Heart right ventricle (tissue), 16 donors: ENCODE measurements at regions of chr1 and their contacts with region 1.

Region 1: GRCh38 chr1:100516857-100517256 is 21.1 kb upstream of the GPR88 start:
- DNase-seq: no peak
- ATAC-seq: no peak
- H3K4me3 ChIP-seq: no peak overlapping the region
- H3K27ac ChIP-seq: no peak overlapping the region
- H3K4me1 ChIP-seq: peaks cover 0 to 4% (median 0%) of the 10 kb centered on the region in 9 donors
- H3K27me3 ChIP-seq: no peaks in the 10 kb centered on the region
- CTCF ChIP-seq: no peak

Region 2: DNA sequence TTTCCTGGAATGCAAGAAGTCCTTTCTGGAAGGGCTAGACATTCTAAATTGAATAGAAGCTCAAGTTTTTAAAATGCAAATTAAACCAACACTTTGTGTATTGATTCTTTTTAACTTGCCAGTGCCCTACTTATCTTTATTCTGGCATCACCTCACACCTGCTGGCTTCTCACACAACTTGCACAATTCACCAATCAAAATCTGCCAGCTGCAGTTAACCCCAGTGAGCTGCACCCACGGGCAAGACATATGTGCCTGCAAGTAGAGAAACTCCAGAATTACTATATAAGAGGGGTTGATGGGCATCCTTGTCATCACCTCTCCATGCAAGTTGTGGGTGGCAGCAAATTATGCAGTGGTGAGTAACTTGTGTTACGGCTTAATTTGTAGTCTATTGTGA is 1264.2 kb before region 1 on chr1:
- intact Hi-C with region 1: no loop called
- DNase-seq: no peak
- ATAC-seq: no peak
- H3K4me3 ChIP-seq: no peak overlapping the region
- H3K27ac ChIP-seq: no peak overlapping the region
- H3K4me1 ChIP-seq: no peaks in the 10 kb centered on the region
- H3K27me3 ChIP-seq: no peaks in the 10 kb centered on the region
- CTCF ChIP-seq: no peak

Region 3: GRCh38 chr1:100539836-100540536 is 23.1 kb after region 1 on chr1:
- intact Hi-C with region 1: loop called in 1 of 10 experiments (anchors 2 kb)
- DNase-seq: peak in 1 of 2 donors; percentile 37
- ATAC-seq: peak; percentile 18 to 78 (median 46)
- H3K4me3 ChIP-seq: peak overlapping the region in 9 of 10 donors; percentile 39 to 61 (median 51)
- H3K27ac ChIP-seq: no peak overlapping the region
- H3K4me1 ChIP-seq: peaks cover 5 to 31% (median 8%) of the 10 kb centered on the region in 9 donors
- H3K27me3 ChIP-seq: peaks cover 6 to 64% (median 54%) of the 10 kb centered on the region in 7 donors
- CTCF ChIP-seq: no peak